ENCODE measurements at regions of chr19 and their contacts with region 1.

Region 1: GRCh38 chr19:29610563-29611271 is 4.6 kb downstream of the POP4 start:
- DNase-seq: peak; percentile 63 to 97 (median 84)

Region 2: DNA sequence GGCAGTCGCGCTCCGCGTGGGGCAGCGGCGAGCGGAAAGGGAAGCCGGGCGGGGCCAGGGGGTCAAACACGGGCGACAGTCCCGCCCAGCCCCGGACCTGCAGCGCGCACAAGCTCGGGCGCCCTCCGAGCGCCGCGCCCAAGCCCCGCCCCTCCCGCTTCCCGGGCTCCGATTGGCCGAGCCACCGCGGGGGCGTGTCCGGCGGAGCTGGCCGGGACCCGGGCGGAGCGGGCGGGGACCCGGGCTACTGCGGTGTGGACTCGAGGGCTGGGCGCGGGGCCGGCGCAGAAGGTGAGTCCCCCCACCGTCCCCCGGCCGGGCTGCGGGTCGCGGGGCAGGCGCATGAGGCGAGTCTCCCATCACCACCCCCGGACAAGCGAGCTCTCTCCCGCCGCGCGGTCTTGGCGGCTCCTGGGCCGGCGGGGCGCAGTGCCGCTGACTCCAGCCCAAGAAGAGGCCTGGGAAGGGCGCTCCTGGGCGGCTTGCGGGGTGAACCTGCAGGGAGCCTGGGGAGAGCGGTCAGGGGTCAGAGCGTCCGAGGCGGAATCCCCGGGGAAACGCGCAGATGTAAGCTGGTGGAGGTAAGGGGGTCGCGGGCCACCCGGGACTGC is 54.6 kb after region 1 on chr19 and contains the start of gene PLEKHF1:
- intact Hi-C with region 1: loop called (anchors 5 kb)
- DNase-seq: peak; percentile 85 to 99 (median 90)

Region 3: DNA sequence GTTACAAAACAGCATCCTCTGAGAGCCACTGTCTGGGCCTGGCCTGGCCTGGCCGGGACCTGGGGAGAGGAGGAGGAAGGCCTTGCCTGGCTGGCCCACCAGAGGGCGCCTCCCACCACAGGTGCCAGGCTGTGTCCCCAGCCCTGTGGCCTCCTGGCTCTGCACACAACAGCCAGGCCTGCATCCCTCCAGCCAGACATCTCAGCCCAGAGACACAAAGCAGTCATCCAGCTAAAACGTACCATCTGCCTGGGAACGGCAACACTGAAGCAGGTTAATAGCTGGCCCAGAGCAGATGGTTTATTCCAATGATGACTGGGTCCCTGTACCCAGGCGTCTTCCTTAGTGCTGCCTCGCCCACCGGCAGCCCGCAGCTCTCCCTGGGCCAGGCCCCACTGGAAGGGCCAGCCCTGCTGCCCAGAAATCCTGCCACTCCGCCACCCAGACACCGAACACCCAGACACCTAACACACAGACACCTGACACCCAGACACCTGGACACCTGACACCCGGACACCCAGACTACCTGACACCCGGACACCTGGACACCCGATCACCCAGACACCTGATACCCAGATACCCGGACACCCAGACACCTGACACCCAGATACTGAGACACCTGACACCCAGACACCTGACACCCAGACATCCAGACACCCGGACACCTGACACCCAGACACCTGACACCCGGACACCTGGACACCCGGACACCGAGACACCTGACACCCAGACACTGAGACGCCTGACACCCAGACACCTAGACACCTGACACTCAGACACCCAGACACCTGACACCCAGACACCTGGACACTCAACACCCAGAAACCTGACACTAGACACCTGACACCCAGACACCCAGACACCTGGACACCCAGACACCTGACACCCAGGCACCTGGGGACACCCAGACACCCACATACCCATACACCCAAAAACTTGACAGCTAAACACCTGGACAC is 84.2 kb after region 1 on chr19:
- intact Hi-C with region 1: loop called (anchors 2 kb)
- DNase-seq: peak; percentile 75 to 98 (median 88)

Measured in posterior cingulate gyrus (tissue), 11 donors.